ENCODE measurements at regions of chr4 and their contacts with region 1.

Region 1: DNA sequence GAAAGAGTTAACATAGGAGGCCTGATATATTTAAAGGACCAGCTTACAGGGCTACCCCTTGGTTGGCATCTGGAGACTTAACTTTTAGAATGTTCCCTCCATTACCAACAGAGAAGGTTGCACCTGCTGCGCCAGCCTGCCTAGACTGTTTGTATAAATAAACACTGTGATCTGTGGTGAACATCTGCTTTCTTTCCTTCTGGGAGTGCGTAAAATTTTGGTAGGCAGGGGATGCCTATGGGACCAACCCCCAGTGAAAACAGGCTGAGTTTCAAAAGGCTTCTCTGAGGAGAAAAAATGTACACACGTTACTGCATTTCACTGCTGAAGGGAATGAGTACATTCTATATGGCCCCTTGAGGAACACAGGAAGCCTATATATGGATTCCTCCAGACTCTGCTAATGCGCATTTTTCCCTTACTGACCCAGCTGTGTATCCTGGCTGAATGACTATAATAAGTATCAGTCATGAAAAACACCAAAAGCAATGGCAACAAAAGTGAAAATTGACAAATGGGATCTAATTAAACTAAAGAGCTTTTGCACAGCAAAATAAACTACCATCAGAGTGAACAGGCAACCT is 13.8 kb downstream of the CENPC start:
- DNase-seq: no peak
- H3K4me3 ChIP-seq: no peak overlapping the region
- H3K27ac ChIP-seq: no peak overlapping the region
- H3K4me1 ChIP-seq: no peaks in the 10 kb centered on the region
- H3K27me3 ChIP-seq: no peaks in the 10 kb centered on the region
- CTCF ChIP-seq: no peak

Region 2: DNA sequence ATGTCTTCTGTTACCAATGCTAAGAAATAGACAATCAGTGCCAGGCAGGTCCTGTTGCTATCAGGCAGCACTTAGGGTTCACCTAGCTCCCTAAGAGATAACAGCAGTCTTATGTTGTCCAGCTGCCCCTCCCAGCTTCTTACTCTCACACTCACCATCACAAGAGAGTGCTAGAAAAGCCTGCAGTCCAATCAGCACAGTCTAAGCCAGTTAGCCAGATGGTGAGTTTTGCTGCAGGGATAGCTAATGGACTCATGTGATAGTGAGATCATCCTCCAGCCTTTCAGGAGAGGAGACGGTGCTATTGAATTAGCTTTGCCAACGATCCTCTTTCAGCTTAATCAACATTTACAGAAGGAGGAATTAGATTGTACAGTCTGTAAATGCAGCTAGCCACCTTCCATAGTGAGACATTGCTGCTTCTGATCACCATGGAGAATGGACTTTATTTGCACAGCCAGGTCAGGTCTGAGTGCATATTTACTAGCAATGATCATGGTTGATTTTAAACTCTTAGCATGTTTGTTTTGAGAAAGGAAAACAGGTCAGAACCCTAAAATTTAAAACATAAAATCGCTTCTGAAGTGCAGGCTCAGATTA is 424.5 kb before region 1 on chr4:
- intact Hi-C with region 1: no loop called
- DNase-seq: no peak
- H3K4me3 ChIP-seq: no peak overlapping the region
- H3K27ac ChIP-seq: no peak overlapping the region
- H3K4me1 ChIP-seq: no peaks in the 10 kb centered on the region
- H3K27me3 ChIP-seq: no peaks in the 10 kb centered on the region
- CTCF ChIP-seq: no peak

Region 3: DNA sequence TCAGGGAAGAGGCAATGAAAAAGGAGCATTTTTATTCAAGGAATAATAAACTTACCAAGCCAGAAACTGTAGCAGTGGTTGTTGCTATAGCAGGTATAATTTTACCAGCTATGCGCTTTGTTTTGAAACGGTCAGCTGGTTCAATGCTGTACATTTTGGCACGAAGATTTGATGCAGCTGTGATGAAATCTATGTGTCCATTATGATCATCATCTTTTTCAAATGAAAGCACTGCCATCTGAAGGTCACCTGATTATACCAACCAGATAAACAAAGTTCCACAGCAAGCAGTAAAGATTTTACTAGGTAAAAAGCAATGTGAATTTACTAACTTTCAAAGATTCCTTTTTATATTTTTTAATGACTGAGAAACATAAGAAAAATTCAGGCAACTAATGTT is 93.5 kb after region 1 on chr4:
- intact Hi-C with region 1: loop called (anchors 10 kb)
- DNase-seq: no peak
- H3K4me3 ChIP-seq: no peak overlapping the region
- H3K27ac ChIP-seq: no peak overlapping the region
- H3K4me1 ChIP-seq: no peaks in the 10 kb centered on the region
- H3K27me3 ChIP-seq: no peaks in the 10 kb centered on the region
- CTCF ChIP-seq: no peak

Measured in tibial artery (tissue), 4 donors.